ENCODE measurements at regions of chr19 and their contacts with region 1.

Region 1: DNA sequence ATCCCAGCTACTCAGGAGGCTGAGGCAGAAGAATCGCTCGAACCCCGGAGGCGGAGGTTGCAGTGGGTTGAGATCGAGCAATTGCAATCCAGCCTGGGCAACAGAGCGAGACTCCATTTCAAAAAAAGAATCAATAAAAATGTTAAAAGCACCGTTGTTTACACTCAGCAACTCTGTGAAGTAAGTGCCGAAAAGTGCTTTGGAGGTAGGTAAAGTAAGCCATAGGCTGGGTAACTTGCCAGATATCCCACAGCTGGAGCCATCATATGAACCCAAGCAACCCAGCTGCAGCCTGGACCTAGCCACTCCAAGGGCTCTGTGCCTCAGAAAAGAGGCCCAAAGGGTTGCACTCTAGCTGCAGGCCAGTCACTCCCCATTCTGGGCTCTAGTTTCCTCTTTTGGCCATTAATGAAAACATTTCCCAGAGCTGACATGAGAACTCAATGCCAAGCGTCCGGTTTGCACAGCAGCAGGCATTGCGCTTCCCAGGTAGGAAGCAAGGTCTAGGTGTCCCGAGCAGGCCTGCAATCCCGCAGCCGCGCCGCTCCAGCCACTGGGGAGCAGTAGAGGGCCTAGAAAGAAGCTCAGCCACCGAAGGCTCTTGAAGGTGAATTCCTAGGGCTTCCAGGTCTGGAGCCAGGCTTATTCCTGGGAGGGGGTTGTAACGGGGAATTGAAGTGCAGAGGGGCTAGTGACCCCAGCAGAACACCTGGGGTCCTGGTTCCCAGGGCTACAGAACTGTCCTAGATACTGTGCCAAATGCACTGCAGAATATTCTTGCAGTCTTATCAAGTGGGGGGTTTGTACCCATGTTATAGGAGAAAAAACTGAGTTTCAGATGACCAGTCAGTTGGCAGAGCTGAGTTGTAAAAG is 4.1 kb upstream of the CD79A start:
- DNase-seq: peak; percentile 53 to 84 (median 65)
- ATAC-seq: peak; percentile 38 to 71 (median 65)
- H3K4me3 ChIP-seq: no peak overlapping the region
- H3K27ac ChIP-seq: peak overlapping the region in 4 of 12 donors; percentile 4 to 86 (median 25)
- H3K4me1 ChIP-seq: peaks cover 0 to 96% (median 20%) of the 10 kb centered on the region in 12 donors
- H3K27me3 ChIP-seq: no peaks in the 10 kb centered on the region
- CTCF ChIP-seq: peak; percentile 52 to 72 (median 64)
- POLR2A ChIP-seq: no peak

Region 2: DNA sequence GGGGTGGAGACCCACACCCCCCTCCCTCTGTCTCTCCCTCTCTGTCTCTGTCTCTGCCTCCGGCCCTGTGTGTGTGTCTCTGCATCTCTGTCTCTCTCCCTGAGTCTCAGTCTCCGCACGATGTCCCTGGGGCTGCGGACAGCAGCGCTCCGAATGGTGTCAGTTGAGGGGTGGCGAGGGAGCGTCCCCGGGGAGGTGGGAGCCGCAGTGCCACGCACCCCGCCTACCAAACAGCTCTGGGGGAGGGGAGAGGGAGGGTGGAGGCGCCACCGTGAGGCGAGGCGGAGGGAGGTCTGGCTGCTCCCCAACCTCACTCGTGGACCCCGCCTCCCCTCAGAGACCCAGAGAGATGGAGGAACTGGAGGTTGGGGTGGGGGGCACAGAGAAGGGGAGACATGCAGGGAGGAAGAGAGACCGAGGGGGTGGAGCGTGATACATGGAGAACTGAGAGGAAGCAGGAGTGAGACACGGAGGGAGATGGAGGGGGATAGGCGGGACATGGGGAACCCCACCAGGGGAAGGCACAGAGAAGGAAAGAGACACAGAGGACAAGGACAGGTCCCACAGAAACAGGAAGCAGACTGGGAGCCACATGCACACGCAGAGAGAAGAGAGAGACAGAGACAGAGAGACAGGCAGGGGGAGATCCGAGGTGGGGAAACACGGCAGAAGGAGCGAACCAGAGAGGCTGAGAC is 48.0 kb after region 1 on chr19:
- intact Hi-C with region 1: no loop called
- DNase-seq: no peak
- ATAC-seq: no peak
- H3K4me3 ChIP-seq: no peak overlapping the region
- H3K27ac ChIP-seq: no peak overlapping the region
- H3K4me1 ChIP-seq: no peaks in the 10 kb centered on the region
- H3K27me3 ChIP-seq: peaks cover 40 to 96% (median 71%) of the 10 kb centered on the region in 9 donors
- CTCF ChIP-seq: no peak
- POLR2A ChIP-seq: no peak

Region 3: DNA sequence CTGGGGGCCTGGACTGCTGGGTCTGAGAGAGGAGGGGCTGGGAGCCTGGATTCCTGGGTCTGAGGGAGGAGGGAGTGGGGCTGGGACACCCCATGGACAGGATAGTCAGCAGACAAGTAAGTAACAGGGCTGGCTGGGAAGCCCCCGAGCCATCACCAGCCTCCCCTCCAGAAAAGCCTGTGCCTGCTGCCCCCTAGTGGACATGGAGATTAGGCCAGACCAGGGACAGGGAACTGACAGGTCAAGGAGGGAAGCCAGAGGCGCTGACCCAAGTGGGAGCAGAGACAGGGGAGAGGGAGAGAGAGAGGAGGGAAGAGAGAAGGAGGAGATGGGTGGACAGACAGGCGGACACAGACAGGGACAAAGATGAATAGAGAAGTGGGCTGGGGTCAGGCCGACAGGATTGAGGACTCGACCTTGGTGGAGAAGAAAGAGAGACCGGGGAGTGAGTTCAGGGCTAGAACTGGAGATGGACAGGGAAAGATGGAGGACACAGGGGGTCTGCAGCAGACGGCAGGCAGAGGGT is 61.9 kb after region 1 on chr19:
- intact Hi-C with region 1: loop called in 7 of 10 experiments (anchors 2 to 5 kb)
- DNase-seq: peak; percentile 58 to 78 (median 70)
- ATAC-seq: peak in 3 of 4 donors; percentile 62 to 75 (median 74)
- H3K4me3 ChIP-seq: no peak overlapping the region
- H3K27ac ChIP-seq: no peak overlapping the region
- H3K4me1 ChIP-seq: peaks cover 0 to 6% (median 0%) of the 10 kb centered on the region in 12 donors
- H3K27me3 ChIP-seq: peaks cover 25 to 77% (median 55%) of the 10 kb centered on the region in 9 donors
- CTCF ChIP-seq: peak; percentile 66 to 85 (median 79)
- POLR2A ChIP-seq: no peak

Region 4: DNA sequence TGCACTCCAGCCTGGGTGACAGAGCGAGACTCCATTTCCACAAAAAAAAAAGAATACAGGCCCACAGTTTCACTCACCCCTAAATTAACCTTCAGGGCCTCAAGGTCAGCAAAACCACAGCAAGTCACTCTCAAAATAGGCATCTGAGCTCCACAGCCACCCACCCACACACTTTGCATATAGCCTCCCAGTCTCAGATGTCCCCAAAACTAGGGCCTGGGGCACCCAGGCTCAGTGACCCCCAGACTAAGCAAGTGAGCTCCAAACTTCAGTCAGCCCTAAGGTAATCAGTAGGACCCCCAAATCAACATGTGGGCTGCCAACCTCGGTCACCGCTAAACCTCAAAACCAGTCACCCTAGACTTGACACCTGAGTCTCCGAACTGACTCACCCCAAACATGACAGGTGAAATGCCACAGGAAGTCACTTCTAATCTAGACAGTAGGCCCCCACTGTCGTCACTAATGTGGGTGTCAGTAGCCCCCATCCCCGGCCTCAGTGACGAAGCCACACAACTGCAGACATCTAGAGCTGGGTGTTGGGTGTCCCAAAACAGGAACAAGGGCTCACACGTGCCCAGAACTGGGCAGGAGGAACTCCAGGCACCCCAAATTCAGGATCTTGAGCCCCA is 72.2 kb after region 1 on chr19:
- intact Hi-C with region 1: loop called in 6 of 10 experiments (anchors 2 to 5 kb)
- DNase-seq: no peak
- ATAC-seq: peak in 1 of 4 donors; percentile 34
- H3K4me3 ChIP-seq: no peak overlapping the region
- H3K27ac ChIP-seq: no peak overlapping the region
- H3K4me1 ChIP-seq: peaks cover 0 to 10% (median 1%) of the 10 kb centered on the region in 12 donors
- H3K27me3 ChIP-seq: peaks cover 1 to 18% (median 12%) of the 10 kb centered on the region in 9 donors
- CTCF ChIP-seq: no peak
- POLR2A ChIP-seq: no peak

Region 5: GRCh38 chr19:41951686-41952172 is 78.7 kb after region 1 on chr19:
- intact Hi-C with region 1: loop called in 9 of 10 experiments (anchors 1 to 5 kb)
- DNase-seq: peak; percentile 68 to 81 (median 79)
- ATAC-seq: peak in 3 of 4 donors; percentile 64 to 71 (median 66)
- H3K4me3 ChIP-seq: no peak overlapping the region
- H3K27ac ChIP-seq: no peak overlapping the region
- H3K4me1 ChIP-seq: peaks cover 0 to 8% (median 0%) of the 10 kb centered on the region in 12 donors
- H3K27me3 ChIP-seq: no peaks in the 10 kb centered on the region
- CTCF ChIP-seq: peak; percentile 91 to 99 (median 98)
- POLR2A ChIP-seq: no peak

Region 6: DNA sequence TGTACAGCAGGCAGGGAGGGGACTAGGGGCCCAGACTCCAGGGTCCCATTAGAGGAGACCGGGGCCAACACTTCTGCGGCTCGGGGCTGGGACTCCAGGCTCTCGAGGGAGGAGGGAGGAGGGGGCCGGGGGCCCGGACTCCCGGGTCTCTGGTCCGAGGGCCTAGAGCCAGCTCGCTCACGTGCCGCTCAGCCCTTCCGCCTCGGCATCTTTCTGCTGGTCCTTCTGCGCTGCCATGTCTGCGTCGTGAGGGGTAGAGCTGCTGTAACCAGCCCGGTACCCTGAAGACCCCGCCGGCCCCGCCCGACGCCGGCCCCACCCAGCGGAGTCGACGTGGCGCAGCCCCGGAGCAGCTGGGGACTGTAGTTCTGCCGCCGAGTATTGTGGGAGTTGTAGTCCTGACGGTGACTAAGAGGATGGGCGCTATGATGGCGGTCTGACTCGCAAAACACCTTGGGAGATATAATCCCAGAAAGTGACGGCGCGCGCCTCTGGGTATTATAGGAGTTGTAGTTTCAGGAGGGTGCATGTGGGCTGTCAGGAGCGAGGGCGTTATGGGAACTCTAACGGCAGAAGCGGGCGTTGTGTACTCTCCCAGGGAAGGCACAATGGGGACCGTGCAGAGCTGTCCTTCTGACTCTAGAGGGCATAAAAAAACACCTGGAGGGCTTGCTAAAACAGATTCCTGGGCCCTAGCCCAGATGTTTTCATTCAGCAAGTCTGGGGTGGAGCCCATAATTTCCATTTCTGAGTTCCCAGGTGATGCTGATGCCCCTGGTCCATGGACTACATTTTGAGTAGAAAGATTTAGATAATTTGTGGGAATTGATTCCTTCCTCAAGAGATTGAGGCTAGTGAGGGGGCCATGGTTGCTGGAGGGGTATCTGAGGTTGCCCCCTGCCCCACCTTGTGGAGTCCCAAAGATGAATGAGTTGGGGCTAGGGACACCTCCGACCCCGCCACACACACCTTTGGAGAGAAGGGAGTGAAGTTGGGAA is 86.3 kb after region 1 on chr19 and contains the start of gene RABAC1:
- intact Hi-C with region 1: loop called in 6 of 10 experiments (anchors 5 kb)
- DNase-seq: peak; percentile 90 to 93 (median 92)
- ATAC-seq: peak; percentile 88 to 93 (median 91)
- H3K4me3 ChIP-seq: peak within 1 kb of the TSS; percentile 74 to 99 (median 95)
- H3K27ac ChIP-seq: peak within 1 kb of the TSS; percentile 60 to 94 (median 88)
- H3K4me1 ChIP-seq: peaks cover 3 to 28% (median 17%) of the 10 kb centered on the region in 12 donors
- H3K27me3 ChIP-seq: no peaks in the 10 kb centered on the region
- CTCF ChIP-seq: peak in 4 of 12 donors; percentile 7 to 17 (median 14)
- POLR2A ChIP-seq: peak in 1 of 2 donors; percentile 45
- total RNA-seq, gene RABAC1: 43.2 to 128 (median 67.2) TPM

Region 7: DNA sequence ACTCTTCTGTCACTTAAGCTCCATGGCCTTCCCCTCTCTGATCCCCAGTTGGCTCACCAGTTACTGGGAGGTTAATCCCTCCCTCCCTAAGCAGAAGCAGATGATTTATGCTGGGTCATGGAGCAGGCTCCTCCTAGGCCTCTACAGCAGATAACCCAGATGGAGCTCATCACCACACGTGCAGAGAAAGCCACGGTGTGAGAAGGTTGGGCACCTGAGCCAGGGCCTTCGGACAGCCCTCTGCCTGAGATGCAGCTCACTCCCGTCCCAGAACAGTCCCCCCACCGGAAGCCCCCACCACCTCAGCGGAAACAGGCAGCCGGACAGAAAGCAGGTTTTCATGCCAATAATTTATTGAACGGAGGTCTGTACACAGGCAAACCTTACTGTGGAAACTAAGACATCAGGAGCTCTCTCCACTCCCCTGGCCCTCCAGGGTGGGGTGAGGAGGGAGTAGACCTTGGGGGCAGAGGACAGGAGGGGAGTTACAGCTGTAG is 356.9 kb after region 1 on chr19:
- intact Hi-C with region 1: loop called in 1 of 10 experiments (anchors 10 kb)
- DNase-seq: no peak
- ATAC-seq: peak in 1 of 4 donors; percentile 17
- H3K4me3 ChIP-seq: no peak overlapping the region
- H3K27ac ChIP-seq: no peak overlapping the region
- H3K4me1 ChIP-seq: peaks cover 0 to 11% (median 0%) of the 10 kb centered on the region in 12 donors
- H3K27me3 ChIP-seq: no peaks in the 10 kb centered on the region
- CTCF ChIP-seq: no peak
- POLR2A ChIP-seq: no peak